Activated CD8-positive, alpha-beta T cell treated with anti-CD3 and anti-CD28 coated beads for 36 hours (primary cell): ENCODE measurements at regions of chr1 and their contacts with region 1.

Region 1: DNA sequence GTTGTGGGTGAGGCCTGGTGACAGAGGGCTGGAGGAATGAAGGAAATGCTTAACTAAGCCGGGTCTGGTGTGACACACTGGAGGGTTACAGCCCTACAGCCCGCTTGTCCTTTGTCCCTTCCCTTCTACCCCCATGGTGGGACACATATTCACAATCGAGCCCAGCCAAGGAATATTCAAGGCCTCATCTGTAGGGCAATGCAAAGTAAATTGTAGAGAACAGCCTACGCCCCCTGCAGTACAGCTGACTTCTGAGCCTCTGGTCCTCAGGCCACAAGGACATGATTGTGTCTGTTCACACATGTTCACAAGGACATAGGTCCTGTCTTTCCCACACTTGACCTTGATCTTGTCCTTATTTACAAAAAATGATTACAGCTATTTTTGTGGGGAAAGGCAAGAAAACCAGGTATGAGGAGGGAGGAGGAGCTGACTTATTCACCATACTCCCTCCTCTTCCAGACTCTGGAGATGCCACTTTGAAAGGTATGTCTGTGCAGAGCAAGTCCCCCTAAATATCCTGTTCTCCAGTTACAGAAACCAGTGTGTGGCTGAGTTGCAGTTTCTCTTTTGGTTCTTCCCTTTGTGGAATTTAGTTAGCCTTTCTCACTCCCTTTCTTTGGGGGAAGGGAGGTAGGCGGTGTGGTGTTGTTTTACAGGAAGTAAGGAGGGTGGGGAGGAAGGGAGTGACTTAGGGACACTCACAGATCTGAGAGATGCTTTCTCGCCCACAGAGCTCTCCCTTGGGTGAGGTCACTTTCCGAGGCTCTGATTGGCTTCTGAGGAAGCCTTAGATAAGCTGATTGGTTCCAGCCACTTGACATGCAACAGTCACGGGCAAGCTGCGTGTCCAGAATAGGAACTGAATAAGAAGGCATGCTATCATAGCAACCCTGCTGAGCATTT is 14.6 kb downstream of the POLR3GL start:
- DNase-seq: peak; percentile 95
- ATAC-seq: peak; percentile 86
- H3K4me3 Mint-ChIP-seq: no peak overlapping the region
- H3K27ac Mint-ChIP-seq: no peak overlapping the region
- H3K4me1 Mint-ChIP-seq: peaks cover 41% of the 10 kb centered on the region
- H3K27me3 Mint-ChIP-seq: no peaks in the 10 kb centered on the region
- CTCF ChIP-seq: no peak

Region 2: GRCh38 chr1:145740266-145740665 is 238.8 kb before region 1 on chr1:
- CTCF ChIA-PET with region 1: no interaction called
- POLR2A ChIA-PET with region 1: no interaction called
- intact Hi-C with region 1: no loop called
- DNase-seq: no peak
- ATAC-seq: no peak
- H3K4me3 Mint-ChIP-seq: no peak overlapping the region
- H3K27ac Mint-ChIP-seq: no peak overlapping the region
- H3K4me1 Mint-ChIP-seq: peaks cover 2% of the 10 kb centered on the region
- H3K27me3 Mint-ChIP-seq: no peaks in the 10 kb centered on the region
- CTCF ChIP-seq: no peak

Region 3: GRCh38 chr1:145757420-145757819 is 221.7 kb before region 1 on chr1:
- CTCF ChIA-PET with region 1: no interaction called
- POLR2A ChIA-PET with region 1: no interaction called
- intact Hi-C with region 1: no loop called
- DNase-seq: no peak
- ATAC-seq: no peak
- H3K4me3 Mint-ChIP-seq: no peak overlapping the region
- H3K27ac Mint-ChIP-seq: no peak overlapping the region
- H3K4me1 Mint-ChIP-seq: peaks cover 9% of the 10 kb centered on the region
- H3K27me3 Mint-ChIP-seq: no peaks in the 10 kb centered on the region
- CTCF ChIP-seq: no peak

Region 4: DNA sequence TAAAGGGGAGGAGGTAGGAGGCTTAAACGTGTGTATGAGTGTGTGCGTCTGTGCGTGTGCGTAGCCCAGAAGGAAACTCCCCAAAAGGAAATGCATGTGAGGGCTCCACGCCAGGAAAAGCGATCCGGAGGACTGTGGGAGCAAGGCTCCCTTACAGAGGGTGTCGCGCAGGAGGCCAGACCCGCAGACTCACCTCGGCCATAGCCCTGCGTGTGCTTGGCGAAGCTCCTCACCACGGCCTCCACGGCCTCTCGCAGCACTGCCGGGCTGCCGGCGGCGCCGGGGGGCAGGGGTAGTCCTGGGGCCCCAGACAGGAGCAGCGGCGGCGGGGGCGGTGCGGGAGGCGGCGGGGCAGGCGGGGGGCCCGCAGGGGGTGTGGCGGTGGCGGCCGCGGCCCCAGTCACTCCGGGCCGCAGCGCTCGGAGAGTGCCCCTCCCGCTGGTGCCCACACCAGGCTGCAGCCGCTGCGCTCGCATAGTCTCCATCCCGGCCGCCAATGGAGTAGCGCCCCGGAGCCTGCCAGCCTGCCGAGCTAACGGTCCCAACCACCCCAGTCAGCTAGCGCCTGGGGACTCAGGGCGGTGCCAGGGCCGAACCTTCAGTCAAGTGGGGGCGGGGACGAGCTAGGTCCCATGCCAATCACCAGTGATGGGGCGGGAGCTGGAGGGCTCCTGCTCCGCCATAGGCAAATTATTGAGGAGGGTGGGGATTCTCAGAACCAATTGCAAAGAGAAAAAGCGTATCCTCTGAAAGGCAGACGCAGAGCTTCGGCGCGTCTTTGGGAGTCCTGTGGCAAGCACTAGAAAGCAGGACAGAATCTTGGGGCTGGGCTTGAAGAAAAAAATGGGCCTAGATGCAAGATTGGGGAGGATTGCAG is 21.4 kb before region 1 on chr1 and contains the start of gene LIX1L:
- CTCF ChIA-PET with region 1: interaction called, 93 read pairs
- POLR2A ChIA-PET with region 1: interaction called, 20 read pairs
- intact Hi-C with region 1: no loop called
- DNase-seq: peak; percentile 98
- ATAC-seq: peak; percentile 89
- H3K4me3 Mint-ChIP-seq: peak within 1 kb of the TSS; percentile 83
- H3K27ac Mint-ChIP-seq: peak within 1 kb of the TSS; percentile 91
- H3K4me1 Mint-ChIP-seq: peaks cover 53% of the 10 kb centered on the region
- H3K27me3 Mint-ChIP-seq: no peaks in the 10 kb centered on the region
- CTCF ChIP-seq: no peak
- total RNA-seq, gene LIX1L: 41.5 to 43.6 TPM

Region 5: GRCh38 chr1:145990249-145991097 is 11.4 kb after region 1 on chr1:
- CTCF ChIA-PET with region 1: interaction called, 147 read pairs
- POLR2A ChIA-PET with region 1: interaction called, 446 read pairs
- intact Hi-C with region 1: loop called (anchors 2 kb)
- DNase-seq: peak; percentile 41
- ATAC-seq: no peak
- H3K4me3 Mint-ChIP-seq: no peak overlapping the region
- H3K27ac Mint-ChIP-seq: no peak overlapping the region
- H3K4me1 Mint-ChIP-seq: peaks cover 61% of the 10 kb centered on the region
- H3K27me3 Mint-ChIP-seq: no peaks in the 10 kb centered on the region
- CTCF ChIP-seq: no peak

Region 6: GRCh38 chr1:146001709-146002108 is 22.6 kb after region 1 on chr1:
- CTCF ChIA-PET with region 1: interaction called, 247 read pairs
- POLR2A ChIA-PET with region 1: interaction called, 446 read pairs
- intact Hi-C with region 1: no loop called
- DNase-seq: no peak
- ATAC-seq: no peak
- H3K4me3 Mint-ChIP-seq: no peak overlapping the region
- H3K27ac Mint-ChIP-seq: peak overlapping the region; percentile 75
- H3K4me1 Mint-ChIP-seq: peaks cover 71% of the 10 kb centered on the region
- H3K27me3 Mint-ChIP-seq: no peaks in the 10 kb centered on the region
- CTCF ChIP-seq: no peak

Region 7: GRCh38 chr1:146012737-146013403 is 33.8 kb after region 1 on chr1:
- CTCF ChIA-PET with region 1: interaction called, 247 read pairs
- POLR2A ChIA-PET with region 1: interaction called, 39 read pairs
- intact Hi-C with region 1: no loop called
- DNase-seq: peak; percentile 76
- ATAC-seq: peak; percentile 69
- H3K4me3 Mint-ChIP-seq: no peak overlapping the region
- H3K27ac Mint-ChIP-seq: no peak overlapping the region
- H3K4me1 Mint-ChIP-seq: peaks cover 9% of the 10 kb centered on the region
- H3K27me3 Mint-ChIP-seq: peaks cover 6% of the 10 kb centered on the region
- CTCF ChIP-seq: peak; percentile 88

Region 8: DNA sequence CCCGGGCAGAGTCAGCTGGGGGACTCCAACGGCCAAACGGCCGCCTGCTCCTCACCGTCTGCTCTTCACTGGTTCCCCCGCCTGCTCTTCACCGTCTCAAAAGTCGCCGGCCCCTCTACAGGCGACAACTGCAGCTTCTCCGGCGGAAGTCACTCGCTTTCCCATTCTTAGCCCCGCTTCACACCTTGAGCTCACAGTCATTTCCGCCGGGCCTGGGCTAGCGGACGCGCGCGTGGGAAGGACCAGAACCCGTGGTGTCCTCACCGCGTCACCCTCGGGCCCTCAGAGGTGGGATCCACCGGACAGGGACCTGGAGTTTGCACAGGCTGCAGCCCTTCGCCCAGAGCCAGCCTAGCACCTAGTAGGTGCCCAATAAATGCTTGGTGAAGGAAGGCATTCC is 70.3 kb after region 1 on chr1:
- CTCF ChIA-PET with region 1: interaction called, 3 read pairs
- POLR2A ChIA-PET with region 1: interaction called, 21 read pairs
- intact Hi-C with region 1: no loop called
- DNase-seq: peak; percentile 16
- ATAC-seq: no peak
- H3K4me3 Mint-ChIP-seq: no peak overlapping the region
- H3K27ac Mint-ChIP-seq: no peak overlapping the region
- H3K4me1 Mint-ChIP-seq: peaks cover 21% of the 10 kb centered on the region
- H3K27me3 Mint-ChIP-seq: no peaks in the 10 kb centered on the region
- CTCF ChIP-seq: no peak